Lower leg skin (tissue), 4 donors: ENCODE measurements at regions of chr6 and their contacts with region 1.

Region 1: GRCh38 chr6:106223300-106223930 is 102.1 kb downstream of the ATG5 start:
- DNase-seq: peak; percentile 32 to 88
- H3K4me3 ChIP-seq: no peak overlapping the region
- CTCF ChIP-seq: peak in 1 of 3 donors; percentile 20
- POLR2A ChIP-seq: no peak

Region 2: DNA sequence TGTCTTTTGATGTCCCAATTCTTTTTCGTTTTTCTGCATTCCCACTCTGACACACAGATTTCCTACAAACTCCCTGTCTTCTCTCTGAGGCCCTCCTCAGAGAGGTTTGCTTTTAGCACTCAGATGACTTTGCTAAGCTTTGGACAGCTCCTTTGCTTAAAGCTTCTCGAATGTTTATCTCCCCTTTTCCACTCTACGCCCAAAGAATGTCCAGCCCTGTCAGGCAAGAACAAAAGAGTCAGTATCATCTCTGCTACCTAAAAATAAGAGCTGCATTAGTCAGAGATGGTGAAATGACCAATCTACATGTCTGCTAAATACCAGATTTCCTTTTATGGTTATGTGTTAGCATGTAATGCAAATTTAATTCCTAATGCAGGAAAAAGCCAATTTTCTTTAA is 877.4 kb before region 1 on chr6:
- intact Hi-C with region 1: no loop called
- DNase-seq: no peak
- H3K4me3 ChIP-seq: no peak overlapping the region
- CTCF ChIP-seq: no peak
- POLR2A ChIP-seq: no peak

Region 3: DNA sequence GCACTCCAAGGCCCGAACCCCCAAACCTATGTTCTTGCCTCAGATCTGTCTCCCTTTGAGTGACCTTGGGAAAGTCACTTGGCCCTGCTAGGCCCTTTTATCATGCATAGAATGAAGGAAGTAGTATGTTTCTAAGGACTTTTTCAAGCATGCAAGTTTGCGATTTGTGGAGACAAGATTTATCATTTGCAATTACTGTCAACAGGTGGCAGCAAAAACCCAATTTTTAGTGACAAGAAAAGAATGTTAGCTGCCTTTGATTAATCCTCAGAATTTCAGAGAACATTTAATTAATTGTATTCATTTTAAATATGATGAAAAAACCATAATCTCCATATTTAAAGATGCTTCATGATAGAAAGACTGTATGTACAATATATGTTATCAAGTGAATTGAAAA is 792.2 kb before region 1 on chr6:
- intact Hi-C with region 1: loop called (anchors 10 kb)
- DNase-seq: no peak
- H3K4me3 ChIP-seq: no peak overlapping the region
- CTCF ChIP-seq: no peak
- POLR2A ChIP-seq: no peak

Region 4: DNA sequence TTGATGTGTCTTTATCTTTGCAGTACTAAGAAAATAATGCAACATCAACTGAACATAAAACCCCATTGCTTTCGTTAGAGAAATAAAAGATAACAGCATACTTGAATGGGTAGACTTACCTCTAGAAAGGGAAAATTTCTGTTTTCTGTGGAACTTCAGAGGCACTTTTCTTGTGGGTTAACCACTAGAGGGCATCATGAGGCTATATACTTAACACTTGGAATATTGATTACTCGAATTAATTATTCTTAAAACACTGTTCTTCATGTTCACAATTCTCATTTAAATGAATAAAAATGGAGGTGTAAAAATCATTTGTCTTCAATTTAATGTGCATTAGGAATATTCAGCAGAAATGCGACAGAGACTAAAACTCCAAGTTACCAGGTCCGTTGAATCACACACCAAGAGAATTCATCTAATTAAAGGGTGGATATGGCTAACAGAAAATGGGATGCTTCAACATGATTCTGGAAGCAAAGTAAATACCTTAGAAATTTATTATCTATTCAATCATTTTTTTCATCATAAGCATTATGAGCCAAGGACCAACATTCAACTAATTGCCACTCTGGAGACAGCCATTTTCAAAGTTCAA is 489.8 kb before region 1 on chr6:
- intact Hi-C with region 1: loop called (anchors 10 kb)
- DNase-seq: no peak
- H3K4me3 ChIP-seq: no peak overlapping the region
- CTCF ChIP-seq: peak in 1 of 3 donors; percentile 12
- POLR2A ChIP-seq: no peak

Region 5: GRCh38 chr6:106141441-106142237 is 81.8 kb before region 1 on chr6:
- intact Hi-C with region 1: no loop called
- DNase-seq: no peak
- H3K4me3 ChIP-seq: no peak overlapping the region
- CTCF ChIP-seq: no peak
- POLR2A ChIP-seq: no peak